ENCODE measurements at regions of chr19 and their contacts with region 1.

Region 1: DNA sequence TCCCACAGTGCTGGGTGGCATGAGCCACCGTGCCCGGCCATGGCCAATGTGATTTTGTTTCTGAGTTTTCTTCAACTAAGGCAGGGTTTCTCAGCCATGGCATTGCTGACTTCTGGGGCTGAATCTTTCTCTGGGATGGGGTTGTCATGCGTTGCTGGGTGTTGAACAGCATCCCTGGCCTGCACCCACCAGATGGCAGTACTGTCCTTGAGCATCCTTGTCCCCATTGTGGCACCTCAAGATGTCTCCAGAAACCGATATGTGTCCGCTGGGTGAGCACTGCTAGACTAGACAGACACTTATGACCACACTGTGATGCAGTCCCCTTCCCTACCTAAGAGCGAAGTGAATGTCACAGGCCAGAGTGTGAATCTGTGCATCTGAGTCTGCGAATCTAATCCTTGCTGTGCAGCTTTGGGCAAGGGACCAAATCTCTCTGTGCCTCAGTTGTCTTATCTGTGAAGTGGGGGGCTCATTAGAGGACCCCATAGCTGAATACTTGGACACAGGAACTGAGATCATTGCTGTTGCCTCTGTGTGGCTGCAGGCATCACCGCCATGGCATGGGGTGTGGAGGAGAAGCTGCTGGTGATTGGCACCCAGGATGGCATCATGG is 50.3 kb upstream of the SIN3B start:
- DNase-seq: peak; percentile 79
- H3K4me3 Mint-ChIP-seq: no peak overlapping the region
- H3K27ac Mint-ChIP-seq: no peak overlapping the region
- H3K4me1 Mint-ChIP-seq: no peaks in the 10 kb centered on the region
- H3K27me3 Mint-ChIP-seq: peaks cover 7% of the 10 kb centered on the region

Region 2: GRCh38 chr19:16698914-16699313 is 80.0 kb before region 1 on chr19:
- CTCF ChIA-PET with region 1: no interaction called
- intact Hi-C with region 1: no loop called
- DNase-seq: no peak
- H3K4me3 Mint-ChIP-seq: no peak overlapping the region
- H3K27ac Mint-ChIP-seq: no peak overlapping the region
- H3K4me1 Mint-ChIP-seq: no peaks in the 10 kb centered on the region
- H3K27me3 Mint-ChIP-seq: peaks cover 3% of the 10 kb centered on the region

Region 3: DNA sequence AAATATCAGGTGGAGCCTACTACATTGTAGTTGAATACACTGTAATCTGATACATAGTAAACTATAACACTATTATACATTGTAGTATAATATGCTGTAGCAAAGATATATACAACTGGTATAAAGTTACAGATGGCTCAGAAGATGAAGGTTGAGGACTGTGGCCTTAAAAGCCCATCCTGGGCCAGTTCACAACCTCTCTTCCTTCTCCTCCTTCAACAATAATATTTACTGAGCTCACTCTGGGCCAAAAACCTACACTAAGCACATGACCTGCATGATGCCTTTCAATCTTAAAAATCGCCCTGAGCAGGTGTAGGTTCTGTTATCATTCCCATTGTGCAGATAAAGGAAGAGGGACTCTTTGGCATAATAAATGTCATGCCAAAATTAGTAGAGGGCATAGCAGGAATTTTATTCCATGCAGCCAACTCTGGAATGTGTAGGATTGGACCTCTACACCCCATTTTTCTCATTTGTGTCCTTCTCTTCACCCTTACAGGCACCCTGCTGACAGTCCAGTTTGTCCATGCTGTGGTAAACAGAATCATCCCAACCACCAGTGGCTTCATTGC is 35.7 kb after region 1 on chr19:
- CTCF ChIA-PET with region 1: no interaction called
- intact Hi-C with region 1: no loop called
- DNase-seq: no peak
- H3K4me3 Mint-ChIP-seq: no peak overlapping the region
- H3K27ac Mint-ChIP-seq: no peak overlapping the region
- H3K4me1 Mint-ChIP-seq: no peaks in the 10 kb centered on the region
- H3K27me3 Mint-ChIP-seq: no peaks in the 10 kb centered on the region

Region 4: GRCh38 chr19:16899566-16900075 is 120.7 kb after region 1 on chr19:
- CTCF ChIA-PET with region 1: no interaction called
- intact Hi-C with region 1: loop called (anchors 2 kb)
- DNase-seq: peak; percentile 55
- H3K4me3 Mint-ChIP-seq: no peak overlapping the region
- H3K27ac Mint-ChIP-seq: no peak overlapping the region
- H3K4me1 Mint-ChIP-seq: peaks cover 13% of the 10 kb centered on the region
- H3K27me3 Mint-ChIP-seq: peaks cover 12% of the 10 kb centered on the region

Region 5: GRCh38 chr19:17052439-17053210 is 273.7 kb after region 1 on chr19:
- CTCF ChIA-PET with region 1: interaction called, 3 read pairs
- intact Hi-C with region 1: loop called (anchors 5 kb)
- DNase-seq: peak; percentile 45
- H3K4me3 Mint-ChIP-seq: no peak overlapping the region
- H3K27ac Mint-ChIP-seq: no peak overlapping the region
- H3K4me1 Mint-ChIP-seq: no peaks in the 10 kb centered on the region
- H3K27me3 Mint-ChIP-seq: no peaks in the 10 kb centered on the region

Measured in activated naive CD4-positive, alpha-beta T cell treated with anti-CD3 and anti-CD28 coated beads for 36 hours (primary cell).